CD8-positive, alpha-beta T cell (primary cell): ENCODE measurements at regions of chr6 and their contacts with region 1.

Region 1: DNA sequence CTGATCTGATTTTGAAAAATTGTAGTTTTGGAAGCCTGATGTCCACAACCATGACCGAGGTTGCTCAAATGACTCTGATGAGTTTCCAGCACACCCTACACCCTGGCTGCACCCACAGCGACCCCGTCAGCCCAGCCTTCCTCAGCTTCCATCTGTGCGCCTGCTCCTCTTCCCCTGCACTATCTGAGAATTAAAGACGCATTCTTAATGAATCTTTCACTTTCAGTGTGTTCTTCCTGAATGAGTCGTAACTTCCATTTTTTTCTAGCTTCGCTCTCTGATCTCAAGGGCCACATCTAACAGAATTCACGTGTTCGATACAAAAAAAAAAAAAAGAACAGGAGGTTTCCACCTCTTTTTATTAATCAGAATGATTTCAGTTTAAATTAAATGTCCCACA is 21.3 kb upstream of the RREB1 start:
- DNase-seq: peak in 7 of 9 experiments; percentile 11 to 77 (median 47)
- ATAC-seq: peak; percentile 68
- H3K4me3 ChIP-seq: peak overlapping the region; percentile 34 to 41
- H3K4me3 Mint-ChIP-seq: peak overlapping the region; percentile 83
- H3K27ac ChIP-seq: peak overlapping the region in 1 of 2 experiments; percentile 48
- H3K27ac Mint-ChIP-seq: peak overlapping the region; percentile 89
- H3K4me1 ChIP-seq: peaks cover 28% of the 10 kb centered on the region
- H3K4me1 Mint-ChIP-seq: peaks cover 35% of the 10 kb centered on the region
- H3K27me3 ChIP-seq: no peaks in the 10 kb centered on the region
- H3K27me3 Mint-ChIP-seq: no peaks in the 10 kb centered on the region
- CTCF ChIP-seq: no peak

Region 2: GRCh38 chr6:7051233-7052114 is 35.0 kb before region 1 on chr6:
- CTCF ChIA-PET with region 1: interaction called, 5 read pairs
- POLR2A ChIA-PET with region 1: interaction called, 8 read pairs
- intact Hi-C with region 1: loop called (anchors 1 to 5 kb)
- DNase-seq: peak; percentile 13 to 77 (median 59)
- ATAC-seq: peak; percentile 79
- H3K4me3 ChIP-seq: peak overlapping the region; percentile 59 to 79
- H3K4me3 Mint-ChIP-seq: peak overlapping the region; percentile 81
- H3K27ac ChIP-seq: peak overlapping the region in 1 of 2 experiments; percentile 50
- H3K27ac Mint-ChIP-seq: peak overlapping the region; percentile 82
- H3K4me1 ChIP-seq: peaks cover 5% of the 10 kb centered on the region
- H3K4me1 Mint-ChIP-seq: peaks cover 15% of the 10 kb centered on the region
- H3K27me3 ChIP-seq: no peaks in the 10 kb centered on the region
- H3K27me3 Mint-ChIP-seq: no peaks in the 10 kb centered on the region
- CTCF ChIP-seq: no peak

Region 3: GRCh38 chr6:7073821-7074525 is 12.5 kb before region 1 on chr6:
- CTCF ChIA-PET with region 1: interaction called, 3 read pairs
- POLR2A ChIA-PET with region 1: interaction called, 5 read pairs
- intact Hi-C with region 1: loop called in 1 of 2 experiments (anchors 1 kb)
- DNase-seq: peak; percentile 16 to 82 (median 55)
- ATAC-seq: peak; percentile 99
- H3K4me3 ChIP-seq: peak overlapping the region in 1 of 2 experiments; percentile 20
- H3K4me3 Mint-ChIP-seq: peak overlapping the region; percentile 80
- H3K27ac ChIP-seq: no peak overlapping the region
- H3K27ac Mint-ChIP-seq: peak overlapping the region; percentile 91
- H3K4me1 ChIP-seq: no peaks in the 10 kb centered on the region
- H3K4me1 Mint-ChIP-seq: peaks cover 11% of the 10 kb centered on the region
- H3K27me3 ChIP-seq: no peaks in the 10 kb centered on the region
- H3K27me3 Mint-ChIP-seq: no peaks in the 10 kb centered on the region
- CTCF ChIP-seq: no peak